H1 (cell line): ENCODE measurements at regions of chr10 and their contacts with region 1.

Region 1: GRCh38 chr10:73997787-73998622 is at the start of gene VCL:
- DNase-seq: peak; percentile 96 to 99
- H3K4me3 ChIP-seq: peak within 1 kb of the TSS; percentile 84 to 99 (median 96)
- H3K27ac ChIP-seq: peak within 1 kb of the TSS; percentile 98
- H3K4me1 ChIP-seq: peaks cover 0 to 6% (median 3%) of the 10 kb centered on the region in 4 experiments; a peak in 6 of 7 replicates
- H3K27me3 ChIP-seq: no peaks in the 10 kb centered on the region
- CTCF ChIP-seq: no peak
- EP300 ChIP-seq: peak in 1 of 2 experiments; percentile 81; a peak in 1 of 3 replicates
- POLR2A ChIP-seq: peak; percentile 97 to 100
- RAD21 ChIP-seq: no peak
- total RNA-seq, gene VCL: 361 and 377 TPM in 2 replicates

Region 2: GRCh38 chr10:73908853-73909538 is 89.0 kb before region 1 on chr10:
- CTCF ChIA-PET with region 1: no interaction called
- POLR2A ChIA-PET with region 1: interaction called, 12 read pairs
- DNase-seq: no peak
- H3K4me3 ChIP-seq: no peak overlapping the region
- H3K27ac ChIP-seq: no peak overlapping the region
- H3K4me1 ChIP-seq: peaks cover 15 to 30% (median 24%) of the 10 kb centered on the region in 4 experiments
- H3K27me3 ChIP-seq: peaks cover 3 to 19% (median 12%) of the 10 kb centered on the region in 4 experiments; a peak in 6 of 7 replicates
- CTCF ChIP-seq: no peak
- EP300 ChIP-seq: no peak
- POLR2A ChIP-seq: no peak
- RAD21 ChIP-seq: no peak

Region 3: DNA sequence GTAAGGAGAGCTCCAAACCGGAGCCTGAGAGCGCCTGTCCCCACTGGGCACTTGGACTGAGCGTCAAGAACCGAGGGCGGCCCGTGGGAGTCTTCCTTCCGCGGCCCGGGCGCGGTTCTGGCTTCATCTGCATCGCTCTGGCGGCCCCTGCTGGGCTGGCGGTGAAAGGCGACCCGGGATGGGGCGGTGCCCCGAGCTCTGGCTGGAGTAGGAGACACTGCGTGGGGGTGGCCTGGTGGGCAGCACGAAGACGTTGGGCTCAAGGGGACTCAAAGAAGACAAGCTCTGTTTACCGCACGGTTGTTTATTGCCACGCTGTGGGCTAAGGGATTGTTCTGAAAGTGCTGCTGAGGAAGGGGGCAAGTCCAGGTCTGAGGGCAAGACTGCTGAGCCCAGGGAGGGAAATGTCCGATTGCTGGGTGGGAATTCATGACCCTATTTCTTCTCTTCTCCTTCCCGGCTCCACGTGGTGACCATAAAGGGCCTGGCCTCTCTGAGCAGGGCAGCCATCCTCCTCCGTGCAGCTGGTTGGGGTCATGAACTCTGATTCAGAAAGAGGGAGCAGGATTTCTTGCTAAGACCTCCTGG is 57.3 kb before region 1 on chr10:
- CTCF ChIA-PET with region 1: interaction called, 12 read pairs
- POLR2A ChIA-PET with region 1: interaction called, 14 read pairs
- DNase-seq: peak in 1 of 2 experiments; percentile 96
- H3K4me3 ChIP-seq: 0 out of 8 replicates have a peak overlapping the region, but pooled peaks of 1 of the 4 experiments have one; percentile 19
- H3K27ac ChIP-seq: no peak overlapping the region
- H3K4me1 ChIP-seq: peaks cover 0 to 4% (median 2%) of the 10 kb centered on the region in 4 experiments; a peak in 3 of 7 replicates
- H3K27me3 ChIP-seq: 0 out of 7 replicates have a peak, but pooled peaks cover 0 to 2% (median 0%) of the 10 kb centered on the region in 4 experiments
- CTCF ChIP-seq: peak; percentile 88 to 90 (median 90)
- EP300 ChIP-seq: no peak
- POLR2A ChIP-seq: no peak; a peak in 1 of 3 replicates
- RAD21 ChIP-seq: peak; percentile 93 to 96

Region 4: DNA sequence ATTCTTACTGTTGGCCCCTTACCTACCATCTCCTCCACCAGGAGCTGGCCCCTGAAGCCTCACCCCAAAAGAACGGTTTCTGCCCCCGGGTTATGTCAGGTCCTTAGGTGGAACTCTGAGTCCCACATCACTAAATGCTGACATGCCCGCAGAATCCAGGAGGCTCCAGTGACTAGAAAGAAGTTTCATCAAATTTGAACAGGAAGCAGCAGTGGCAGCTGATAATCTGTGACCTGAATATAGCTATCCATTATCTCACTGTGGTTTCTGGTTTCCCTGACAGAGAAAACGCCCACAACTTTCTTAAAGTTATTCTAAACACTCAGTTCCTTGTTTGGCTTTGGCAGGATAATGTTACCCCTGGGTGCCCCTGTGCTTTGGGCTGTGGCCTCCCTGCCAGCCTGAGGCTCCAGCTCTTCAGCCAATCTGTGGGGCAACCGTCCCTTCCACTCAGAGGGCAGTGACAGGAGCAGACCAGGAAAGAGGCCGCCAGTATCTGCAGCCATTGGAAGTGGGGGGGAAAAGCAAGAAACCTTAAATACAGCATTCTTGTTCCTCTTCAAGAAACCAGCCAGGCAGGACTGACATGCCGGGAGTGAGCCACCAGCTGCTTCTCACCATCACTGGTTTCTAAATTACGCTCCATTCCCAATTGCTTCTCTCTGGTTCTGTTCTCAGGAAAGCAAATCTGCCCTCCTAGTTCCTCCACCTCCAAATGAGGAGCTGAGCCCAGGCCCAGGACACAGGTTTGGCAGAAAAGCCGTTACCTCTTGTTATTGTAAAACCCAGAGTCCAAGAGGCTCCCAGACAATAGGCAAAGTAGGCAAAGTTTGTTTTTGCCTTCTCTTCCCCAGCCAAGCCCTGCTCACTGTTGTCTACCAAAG is 41.3 kb before region 1 on chr10:
- CTCF ChIA-PET with region 1: interaction called, 11 read pairs
- POLR2A ChIA-PET with region 1: interaction called, 261 read pairs
- DNase-seq: no peak
- H3K4me3 ChIP-seq: no peak overlapping the region
- H3K27ac ChIP-seq: no peak overlapping the region
- H3K4me1 ChIP-seq: peaks cover 2 to 5% (median 5%) of the 10 kb centered on the region in 4 experiments
- H3K27me3 ChIP-seq: no peaks in the 10 kb centered on the region
- CTCF ChIP-seq: no peak
- EP300 ChIP-seq: no peak
- POLR2A ChIP-seq: no peak
- RAD21 ChIP-seq: no peak

Region 5: DNA sequence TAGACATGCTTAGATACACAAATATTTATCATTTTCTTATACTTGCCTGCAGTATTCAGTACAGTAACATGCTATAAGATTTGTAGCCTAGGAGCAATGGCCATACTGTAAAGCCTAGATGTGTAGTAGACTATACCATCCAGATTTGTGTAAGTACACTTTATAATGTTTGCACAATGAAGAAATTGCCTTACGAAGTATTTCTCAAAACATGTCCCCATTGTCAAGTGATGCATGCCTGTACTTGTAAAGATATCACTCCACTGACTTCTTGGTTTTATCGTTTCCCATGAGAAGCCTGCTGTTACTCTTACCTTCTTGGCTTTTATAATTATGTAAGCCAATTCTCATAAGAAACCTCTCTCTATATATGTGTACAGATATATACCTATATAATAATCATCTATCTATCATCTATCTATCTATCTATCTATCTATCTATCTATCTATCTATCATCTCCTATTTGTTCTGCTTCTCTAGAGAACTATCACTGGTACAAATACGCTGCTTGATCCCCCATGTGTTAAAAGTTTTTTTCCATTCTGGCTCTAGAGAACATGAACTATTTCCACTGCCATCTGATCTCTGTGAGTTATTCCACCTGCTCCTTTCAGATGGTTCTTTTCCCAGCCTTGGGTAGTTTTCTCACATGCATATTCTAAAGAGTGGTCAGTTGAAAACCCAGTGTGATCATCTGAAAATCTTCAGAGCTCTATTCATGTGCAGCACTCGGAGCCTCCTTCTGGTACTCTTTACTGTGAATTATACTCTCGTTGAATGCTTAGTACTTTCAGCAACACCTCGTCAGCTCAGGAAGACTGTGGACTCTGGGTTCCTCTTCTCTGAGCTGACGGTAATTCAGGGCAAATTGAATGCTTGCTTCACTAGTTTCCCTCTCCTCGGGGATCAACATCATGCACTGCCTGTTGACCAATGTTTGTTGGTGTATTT is 14.6 kb before region 1 on chr10:
- CTCF ChIA-PET with region 1: interaction called, 3 read pairs
- POLR2A ChIA-PET with region 1: interaction called, 12 read pairs
- DNase-seq: no peak
- H3K4me3 ChIP-seq: no peak overlapping the region
- H3K27ac ChIP-seq: no peak overlapping the region
- H3K4me1 ChIP-seq: peaks cover 1 to 7% (median 2%) of the 10 kb centered on the region in 4 experiments; a peak in 4 of 7 replicates
- H3K27me3 ChIP-seq: no peaks in the 10 kb centered on the region
- CTCF ChIP-seq: no peak
- EP300 ChIP-seq: no peak
- POLR2A ChIP-seq: no peak
- RAD21 ChIP-seq: no peak

Region 6: DNA sequence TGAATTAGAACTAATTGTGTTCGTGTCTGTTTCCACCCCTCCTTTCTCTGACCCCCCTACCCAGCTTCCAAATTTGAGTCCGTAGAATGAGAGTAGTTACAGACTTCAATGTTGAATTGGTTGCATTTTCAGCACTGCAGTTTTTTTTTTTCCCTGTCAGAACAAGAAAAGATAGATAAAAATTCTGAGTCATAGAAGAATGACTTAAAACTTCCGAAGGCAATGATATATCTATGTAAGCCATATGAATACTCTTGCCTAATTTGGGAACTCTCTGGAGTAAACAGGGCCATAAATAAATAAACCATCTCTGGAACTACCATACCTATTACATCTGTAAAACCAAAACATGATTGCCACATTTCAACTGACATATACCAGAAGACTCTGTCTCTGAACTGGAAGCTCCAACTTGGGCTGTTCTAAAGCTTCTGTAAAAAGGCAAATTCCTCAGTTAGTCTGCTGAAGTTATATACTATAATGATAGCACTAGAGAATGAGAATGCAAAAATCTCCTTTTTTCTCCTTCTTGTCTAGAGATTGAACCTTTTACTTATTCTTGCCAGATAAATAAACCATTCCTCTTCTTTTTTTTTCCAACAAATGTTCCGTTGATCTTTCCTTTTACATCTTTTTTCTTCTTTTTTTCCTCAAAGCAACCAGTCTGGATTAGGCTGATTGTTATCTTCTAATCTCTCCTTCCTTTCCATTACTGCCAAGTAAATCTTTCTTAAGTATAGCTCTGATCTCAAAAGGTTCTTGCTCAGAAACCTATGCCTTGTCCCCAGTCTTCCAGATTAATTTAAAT is 23.4 kb after region 1 on chr10:
- CTCF ChIA-PET with region 1: interaction called, 11 read pairs
- POLR2A ChIA-PET with region 1: interaction called, 170 read pairs
- DNase-seq: no peak
- H3K4me3 ChIP-seq: no peak overlapping the region
- H3K27ac ChIP-seq: no peak overlapping the region
- H3K4me1 ChIP-seq: peaks cover 0 to 10% (median 2%) of the 10 kb centered on the region in 4 experiments; a peak in 4 of 7 replicates
- H3K27me3 ChIP-seq: no peaks in the 10 kb centered on the region
- CTCF ChIP-seq: no peak
- EP300 ChIP-seq: no peak
- POLR2A ChIP-seq: 0 out of 3 replicates have a peak, but pooled peaks of 1 of the 2 experiments have one; percentile 35
- RAD21 ChIP-seq: no peak